HCT116 (cell line): ENCODE measurements at regions of chr2 and their contacts with region 1.

Region 1: DNA sequence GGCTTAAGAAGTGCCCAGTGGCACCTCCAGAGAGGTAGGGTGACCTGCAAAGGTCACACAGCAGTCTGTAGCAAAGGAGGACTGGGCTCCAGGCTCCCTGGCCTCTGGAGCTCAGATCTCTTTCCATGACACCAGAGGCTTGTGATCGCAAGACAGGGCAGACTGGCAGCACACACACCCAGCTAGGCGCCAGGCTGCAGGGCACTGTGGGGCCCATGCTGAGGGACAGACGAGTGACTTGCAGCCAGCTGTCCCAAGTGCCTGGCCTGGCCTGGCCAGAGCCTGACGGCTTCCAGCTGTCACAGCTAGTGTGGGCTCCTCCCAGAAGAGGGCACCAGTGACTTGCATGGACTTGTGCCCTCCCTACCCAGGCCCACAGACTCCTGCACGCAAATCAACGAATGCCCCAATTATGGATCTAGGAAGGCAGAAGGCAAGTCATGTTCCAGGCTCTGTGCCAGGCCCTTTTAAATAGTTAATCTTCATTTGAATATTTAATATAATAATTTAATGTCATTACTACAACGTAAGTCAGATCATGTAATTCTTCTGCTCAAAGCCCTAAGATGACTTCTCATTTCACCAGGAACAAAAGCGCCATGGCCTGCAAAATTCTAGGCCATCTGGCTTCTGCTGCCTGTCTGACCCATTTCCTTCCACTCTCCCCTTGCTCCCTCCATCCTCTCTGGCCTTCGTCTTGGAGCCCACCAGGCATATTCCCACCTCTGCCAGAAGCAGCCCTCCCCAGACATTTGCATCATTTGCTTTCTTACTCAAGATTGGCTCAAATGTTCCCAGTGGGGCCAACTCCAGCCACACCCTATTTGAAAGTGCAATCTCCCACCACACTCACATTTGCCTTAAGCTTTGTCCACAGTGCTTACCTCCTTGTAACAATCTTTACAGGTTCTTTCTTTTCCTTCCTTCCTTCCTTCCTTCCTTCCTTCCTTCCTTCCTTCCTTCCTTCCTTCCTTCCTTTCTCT is 3.7 kb upstream of the SPEG start:
- DNase-seq: no peak
- ATAC-seq: peak; percentile 85
- H3K4me3 ChIP-seq: no peak overlapping the region
- H3K27ac ChIP-seq: no peak overlapping the region
- H3K4me1 ChIP-seq: peaks cover 6 to 32% of the 10 kb centered on the region in 2 experiments
- H3K27me3 ChIP-seq: no peaks in the 10 kb centered on the region
- CTCF ChIP-seq: peak; percentile 10 to 53 (median 29); a peak in 2 of 6 replicates
- POLR2A ChIP-seq: no peak
- RAD21 ChIP-seq: peak; percentile 72

Region 2: DNA sequence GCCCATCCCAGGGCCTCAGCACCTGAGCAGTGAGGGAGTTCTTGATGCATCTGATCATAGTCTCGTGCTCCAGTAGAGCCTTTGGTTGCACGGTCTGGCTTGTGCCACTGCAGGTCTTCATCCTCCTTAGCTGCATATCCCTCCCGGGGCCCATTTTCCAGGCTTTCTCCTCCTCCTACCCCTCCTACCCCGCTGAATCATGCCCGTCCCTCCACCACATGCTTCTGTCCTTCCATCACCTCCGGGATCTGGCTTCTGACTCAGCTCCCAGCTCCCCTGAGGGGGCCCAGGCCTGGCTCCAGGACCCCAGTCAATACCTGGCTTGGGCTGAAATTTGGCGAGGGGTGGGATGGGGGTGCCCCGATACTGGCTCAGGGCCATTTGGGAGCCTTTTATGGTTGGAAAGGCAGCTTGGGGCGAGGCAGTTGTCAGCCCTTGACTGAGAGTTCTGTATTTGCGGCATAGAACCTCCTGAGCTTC is 22.0 kb after region 1 on chr2:
- CTCF ChIA-PET with region 1: interaction called, 17 read pairs
- POLR2A ChIA-PET with region 1: no interaction called
- RAD21 ChIA-PET with region 1: no interaction called
- intact Hi-C with region 1: no loop called
- DNase-seq: peak; percentile 71
- ATAC-seq: peak; percentile 87
- H3K4me3 ChIP-seq: peak overlapping the region in 1 of 2 experiments; percentile 17; a peak in 2 of 4 replicates
- H3K27ac ChIP-seq: peak overlapping the region; percentile 75
- H3K4me1 ChIP-seq: peaks cover 26 to 53% of the 10 kb centered on the region in 2 experiments
- H3K27me3 ChIP-seq: no peaks in the 10 kb centered on the region
- CTCF ChIP-seq: no peak
- POLR2A ChIP-seq: no peak
- RAD21 ChIP-seq: no peak

Region 3: GRCh38 chr2:219726916-219727315 is 296.0 kb after region 1 on chr2:
- CTCF ChIA-PET with region 1: no interaction called
- POLR2A ChIA-PET with region 1: no interaction called
- RAD21 ChIA-PET with region 1: no interaction called
- intact Hi-C with region 1: no loop called
- DNase-seq: no peak
- ATAC-seq: peak; percentile 47
- H3K4me3 ChIP-seq: no peak overlapping the region
- H3K27ac ChIP-seq: peak overlapping the region; percentile 21; the same call in 1 of the 2 replicates
- H3K4me1 ChIP-seq: peaks cover 30 to 95% of the 10 kb centered on the region in 2 experiments
- H3K27me3 ChIP-seq: no peaks in the 10 kb centered on the region
- CTCF ChIP-seq: peak in 2 of 3 experiments; percentile 31 to 58; a peak in 3 of 6 replicates
- POLR2A ChIP-seq: no peak
- RAD21 ChIP-seq: peak; percentile 76